T-cell (primary cell): ENCODE measurements at regions of chr11 and their contacts with region 1.

Region 1: DNA sequence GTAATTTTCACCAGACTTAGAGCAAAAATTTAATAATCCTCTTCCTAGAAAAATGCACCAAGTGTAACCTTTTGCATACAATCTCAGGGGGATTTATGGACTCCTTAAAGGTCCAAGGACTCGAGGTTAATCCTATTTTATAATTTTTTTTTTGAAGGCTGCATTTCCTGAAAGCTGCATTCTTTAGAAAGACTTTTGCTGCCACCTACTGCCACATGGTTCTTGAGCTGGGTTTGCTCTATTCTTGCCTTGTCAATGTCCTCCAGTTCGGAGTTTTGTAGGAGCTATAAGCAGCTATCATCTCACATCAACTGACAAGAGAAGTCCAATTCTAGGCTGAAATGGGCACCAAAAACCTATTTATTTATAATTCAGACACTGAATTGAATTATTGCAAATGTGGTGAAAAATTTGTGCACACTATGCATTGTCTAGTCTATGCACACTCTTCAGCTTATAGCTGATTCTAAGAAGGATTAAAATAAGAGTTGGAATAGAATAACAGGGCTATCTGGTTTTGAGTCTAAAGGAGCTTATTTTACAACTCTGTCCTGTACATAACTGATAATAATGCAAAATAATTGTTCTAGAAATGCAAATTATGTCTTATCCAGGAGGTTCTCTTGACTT is 31.3 kb downstream of the TRAF6 start:
- DNase-seq: peak in 14 of 35 experiments; percentile 8 to 65 (median 17)
- ATAC-seq: no peak
- H3K4me3 ChIP-seq: no peak overlapping the region
- H3K4me3 Mint-ChIP-seq: no peak overlapping the region
- H3K27ac ChIP-seq: no peak overlapping the region
- H3K27ac Mint-ChIP-seq: no peak overlapping the region
- H3K4me1 ChIP-seq: peaks cover 0 to 4% of the 10 kb centered on the region in 2 experiments
- H3K4me1 Mint-ChIP-seq: peaks cover 0 to 6% (median 5%) of the 10 kb centered on the region in 3 donors
- H3K27me3 ChIP-seq: no peaks in the 10 kb centered on the region
- H3K27me3 Mint-ChIP-seq: no peaks in the 10 kb centered on the region

Region 2: GRCh38 chr11:35822815-35823495 is 655.9 kb before region 1 on chr11:
- CTCF ChIA-PET with region 1: interaction called, 4 to 15 read pairs
- POLR2A ChIA-PET with region 1: no interaction called
- DNase-seq: no peak
- ATAC-seq: no peak
- H3K4me3 ChIP-seq: no peak overlapping the region
- H3K4me3 Mint-ChIP-seq: no peak overlapping the region
- H3K27ac ChIP-seq: no peak overlapping the region
- H3K27ac Mint-ChIP-seq: no peak overlapping the region
- H3K4me1 ChIP-seq: peaks cover 0 to 8% of the 10 kb centered on the region in 2 experiments
- H3K4me1 Mint-ChIP-seq: peaks cover 7 to 20% (median 19%) of the 10 kb centered on the region in 3 donors
- H3K27me3 ChIP-seq: peaks cover 0 to 5% of the 10 kb centered on the region in 2 experiments
- H3K27me3 Mint-ChIP-seq: no peaks in the 10 kb centered on the region

Region 3: GRCh38 chr11:36289226-36289852 is 189.5 kb before region 1 on chr11 and contains the start of gene COMMD9:
- CTCF ChIA-PET with region 1: interaction called, 8 to 56 read pairs
- POLR2A ChIA-PET with region 1: no interaction called
- DNase-seq: peak; percentile 84 to 97 (median 92)
- ATAC-seq: peak; percentile 98 to 99 (median 98)
- H3K4me3 ChIP-seq: peak within 1 kb of the TSS; percentile 67 to 93
- H3K4me3 Mint-ChIP-seq: peak within 1 kb of the TSS; percentile 84 to 94 (median 94)
- H3K27ac ChIP-seq: peak within 1 kb of the TSS; percentile 15
- H3K27ac Mint-ChIP-seq: peak within 1 kb of the TSS; percentile 88 to 93
- H3K4me1 ChIP-seq: peaks cover 5 to 13% of the 10 kb centered on the region in 2 experiments
- H3K4me1 Mint-ChIP-seq: peaks cover 43 to 56% (median 49%) of the 10 kb centered on the region in 3 donors
- H3K27me3 ChIP-seq: no peaks in the 10 kb centered on the region
- H3K27me3 Mint-ChIP-seq: no peaks in the 10 kb centered on the region
- total RNA-seq, gene COMMD9: 37.8 to 48.0 (median 40.3) TPM

Region 4: GRCh38 chr11:36431429-36432092 is 47.3 kb before region 1 on chr11:
- CTCF ChIA-PET with region 1: no interaction called
- POLR2A ChIA-PET with region 1: no interaction called
- DNase-seq: peak in 2 of 35 experiments; percentile 24 to 29
- ATAC-seq: peak in 1 of 4 experiments; percentile 81
- H3K4me3 ChIP-seq: no peak overlapping the region
- H3K4me3 Mint-ChIP-seq: peak overlapping the region in 1 of 3 donors; percentile 13
- H3K27ac ChIP-seq: no peak overlapping the region
- H3K27ac Mint-ChIP-seq: peak overlapping the region; percentile 5 to 48
- H3K4me1 ChIP-seq: peaks cover 0 to 23% of the 10 kb centered on the region in 2 experiments
- H3K4me1 Mint-ChIP-seq: peaks cover 0 to 20% (median 9%) of the 10 kb centered on the region in 3 donors
- H3K27me3 ChIP-seq: no peaks in the 10 kb centered on the region
- H3K27me3 Mint-ChIP-seq: peaks cover 0 to 3% of the 10 kb centered on the region in 2 donors

Region 5: DNA sequence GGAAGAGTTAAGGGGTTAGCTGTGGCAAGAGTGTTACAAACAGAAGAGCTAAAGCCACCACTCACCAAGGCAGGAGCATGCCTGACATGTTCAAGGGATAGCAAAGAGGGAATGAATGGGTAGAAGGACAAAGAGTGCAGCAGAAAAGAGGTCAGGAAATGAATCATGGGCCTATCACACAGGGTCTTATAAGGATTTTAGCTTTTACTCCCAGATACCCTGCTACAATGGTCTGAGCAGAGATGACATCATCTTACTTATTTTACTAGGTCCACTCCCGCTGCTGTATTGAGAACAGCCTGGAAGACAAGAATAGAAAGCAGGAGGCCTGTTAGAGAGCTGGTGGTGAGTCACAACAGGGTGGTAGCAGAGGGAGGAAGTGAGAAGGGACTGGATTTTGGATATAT is 21.5 kb after region 1 on chr11:
- CTCF ChIA-PET with region 1: no interaction called
- POLR2A ChIA-PET with region 1: no interaction called
- DNase-seq: no peak
- ATAC-seq: no peak
- H3K4me3 ChIP-seq: no peak overlapping the region
- H3K4me3 Mint-ChIP-seq: no peak overlapping the region
- H3K27ac ChIP-seq: no peak overlapping the region
- H3K27ac Mint-ChIP-seq: peak overlapping the region; percentile 6 to 64
- H3K4me1 ChIP-seq: no peaks in the 10 kb centered on the region
- H3K4me1 Mint-ChIP-seq: peaks cover 35 to 43% (median 40%) of the 10 kb centered on the region in 3 donors
- H3K27me3 ChIP-seq: no peaks in the 10 kb centered on the region
- H3K27me3 Mint-ChIP-seq: no peaks in the 10 kb centered on the region

Region 6: DNA sequence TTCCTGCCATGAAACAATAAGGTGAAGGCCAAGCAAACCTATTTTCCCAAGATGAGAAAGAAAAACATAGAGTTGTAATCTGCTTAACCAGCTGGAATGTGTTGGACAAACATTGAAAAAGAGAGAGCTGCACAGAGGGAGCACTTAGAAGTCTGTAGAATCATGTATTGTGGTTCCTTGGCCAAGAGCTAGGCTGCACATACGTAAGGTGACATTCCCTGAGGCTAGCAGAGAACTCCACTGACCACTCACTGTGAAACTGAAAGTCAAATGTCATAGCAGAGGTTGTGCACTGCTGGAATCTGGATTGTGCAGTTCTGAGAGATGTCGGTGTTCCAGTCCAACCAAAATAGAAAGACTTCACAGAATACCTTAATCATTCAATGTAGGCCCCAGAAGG is 892.0 kb after region 1 on chr11:
- CTCF ChIA-PET with region 1: no interaction called
- POLR2A ChIA-PET with region 1: no interaction called
- DNase-seq: no peak
- ATAC-seq: no peak
- H3K4me3 ChIP-seq: no peak overlapping the region
- H3K4me3 Mint-ChIP-seq: no peak overlapping the region
- H3K27ac ChIP-seq: no peak overlapping the region
- H3K27ac Mint-ChIP-seq: no peak overlapping the region
- H3K4me1 ChIP-seq: no peaks in the 10 kb centered on the region
- H3K4me1 Mint-ChIP-seq: no peaks in the 10 kb centered on the region
- H3K27me3 ChIP-seq: no peaks in the 10 kb centered on the region
- H3K27me3 Mint-ChIP-seq: no peaks in the 10 kb centered on the region